HEK293 (cell line): ENCODE measurements at regions of chr22 and their contacts with region 1.

Region 1: GRCh38 chr22:26364066-26365015 is 64.7 kb upstream of the ASPHD2 start:
- H3K4me3 ChIP-seq: no peak overlapping the region
- H3K27ac ChIP-seq: no peak overlapping the region
- H3K4me1 ChIP-seq: no peaks in the 10 kb centered on the region
- CTCF ChIP-seq: peak; percentile 62; the same call in 1 of the 2 replicates

Region 2: DNA sequence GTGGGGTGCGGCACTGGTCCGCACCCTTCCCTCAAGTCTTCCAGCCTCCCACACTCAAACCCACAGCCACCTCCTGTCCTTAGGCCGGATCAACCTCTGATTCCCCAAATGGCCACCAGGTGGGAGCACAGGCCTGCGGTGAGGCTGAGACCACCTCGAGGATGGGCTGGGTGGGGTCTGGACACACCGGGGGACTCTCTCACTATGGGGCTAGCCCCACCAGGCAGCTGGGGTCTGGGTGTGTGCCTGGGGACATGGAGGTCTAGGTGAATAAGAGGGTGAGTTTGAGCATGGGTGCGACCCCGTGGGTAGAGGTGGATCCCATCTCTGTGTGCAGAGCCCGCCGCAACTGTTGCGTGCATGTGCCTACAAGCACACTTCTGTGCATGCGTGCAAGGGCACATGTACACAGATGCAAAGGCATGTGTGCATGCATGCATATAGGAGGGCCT is 589.7 kb before region 1 on chr22:
- CTCF ChIA-PET with region 1: interaction called, 15 read pairs
- POLR2A ChIA-PET with region 1: no interaction called
- H3K4me3 ChIP-seq: no peak overlapping the region
- H3K27ac ChIP-seq: no peak overlapping the region
- H3K4me1 ChIP-seq: no peaks in the 10 kb centered on the region
- CTCF ChIP-seq: peak; percentile 57

Region 3: GRCh38 chr22:26287382-26288225 is 76.7 kb before region 1 on chr22:
- CTCF ChIA-PET with region 1: no interaction called
- POLR2A ChIA-PET with region 1: no interaction called
- H3K4me3 ChIP-seq: no peak overlapping the region
- H3K27ac ChIP-seq: no peak overlapping the region
- H3K4me1 ChIP-seq: no peaks in the 10 kb centered on the region
- CTCF ChIP-seq: no peak

Region 4: DNA sequence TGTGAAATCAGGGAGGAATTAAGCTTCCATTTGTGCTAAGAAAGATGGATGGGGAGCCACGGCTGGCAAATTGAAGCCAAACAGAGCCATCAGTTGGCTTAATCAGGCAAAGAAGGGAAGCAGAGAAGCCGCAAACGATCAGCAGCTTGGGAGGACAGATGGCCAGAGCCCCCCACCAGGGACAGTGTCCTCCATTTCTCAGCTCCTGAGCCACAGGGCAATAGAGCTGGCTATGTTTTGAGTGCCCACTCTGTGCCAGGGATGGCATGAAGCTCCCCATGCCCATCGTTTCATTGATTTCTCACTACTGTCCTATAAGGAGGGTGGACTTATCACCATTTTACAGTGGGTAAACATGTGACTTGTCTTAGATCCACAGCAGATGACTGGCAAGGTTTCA is 61.6 kb before region 1 on chr22:
- CTCF ChIA-PET with region 1: no interaction called
- POLR2A ChIA-PET with region 1: no interaction called
- H3K4me3 ChIP-seq: no peak overlapping the region
- H3K27ac ChIP-seq: no peak overlapping the region
- H3K4me1 ChIP-seq: no peaks in the 10 kb centered on the region
- CTCF ChIP-seq: no peak

Region 5: DNA sequence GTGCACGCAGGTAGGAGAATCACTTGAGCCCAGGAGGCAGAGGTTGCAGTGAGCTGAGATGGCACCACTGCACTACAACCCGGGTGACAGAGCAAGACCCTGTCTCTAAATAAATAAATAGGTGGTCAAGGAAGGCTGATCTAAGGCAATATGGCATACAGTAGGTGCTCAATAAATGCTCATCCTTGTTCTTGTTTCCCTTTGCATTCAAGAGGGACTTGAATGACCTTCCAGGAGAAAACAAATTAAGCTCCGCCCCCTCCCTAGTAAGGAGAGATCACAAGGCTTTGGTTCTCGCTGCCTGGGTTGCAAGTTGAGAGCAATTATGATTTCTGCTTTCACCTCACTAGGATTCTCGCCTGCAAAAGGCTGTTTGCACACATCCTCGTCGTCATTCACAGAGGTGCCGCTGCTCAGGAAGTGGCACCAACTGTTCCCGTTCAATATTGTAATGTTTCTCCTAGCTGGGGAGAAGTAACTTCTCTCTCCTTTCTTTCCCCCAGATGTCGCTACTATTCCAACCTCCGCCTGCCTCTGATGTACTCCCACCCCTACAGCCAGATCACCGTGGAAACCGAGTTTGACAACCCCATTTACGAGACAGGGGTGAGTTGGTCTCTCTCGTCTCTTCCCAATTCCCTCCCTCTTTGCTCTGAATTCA is 13.0 kb after region 1 on chr22:
- CTCF ChIA-PET with region 1: interaction called, 226 read pairs
- POLR2A ChIA-PET with region 1: no interaction called
- H3K4me3 ChIP-seq: no peak overlapping the region
- H3K27ac ChIP-seq: no peak overlapping the region
- H3K4me1 ChIP-seq: no peaks in the 10 kb centered on the region
- CTCF ChIP-seq: peak; percentile 75

Region 6: DNA sequence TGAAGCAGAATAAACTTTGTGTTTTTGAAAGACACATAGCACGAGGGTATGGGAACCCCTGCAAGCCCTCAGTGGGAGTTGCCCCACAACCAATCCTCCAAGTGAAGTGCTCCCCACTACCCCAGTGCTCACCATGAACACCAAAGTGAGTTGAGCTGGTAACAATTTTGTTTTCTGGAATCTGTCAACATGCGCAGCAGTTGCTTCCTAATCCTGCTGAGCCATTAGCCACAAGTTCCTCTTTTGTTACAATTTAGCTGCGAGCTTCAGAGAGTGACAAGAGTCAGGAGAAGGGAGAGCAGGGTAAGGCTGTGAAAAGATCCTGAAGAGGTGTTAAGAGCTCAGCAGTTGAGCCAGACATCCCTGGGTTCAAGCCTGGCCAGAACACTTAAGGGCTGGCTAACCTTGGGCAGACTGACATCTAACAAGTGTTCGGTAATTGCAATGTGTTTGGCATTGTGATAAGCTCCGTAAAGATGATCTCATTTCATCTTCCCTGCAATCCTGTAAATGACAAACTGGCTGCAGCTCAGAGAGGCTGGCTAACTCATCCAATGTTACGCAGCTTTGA is 40.6 kb after region 1 on chr22:
- CTCF ChIA-PET with region 1: interaction called, 16 read pairs
- POLR2A ChIA-PET with region 1: interaction called, 7 read pairs
- H3K4me3 ChIP-seq: no peak overlapping the region
- H3K27ac ChIP-seq: no peak overlapping the region
- H3K4me1 ChIP-seq: no peaks in the 10 kb centered on the region
- CTCF ChIP-seq: no peak

Region 7: DNA sequence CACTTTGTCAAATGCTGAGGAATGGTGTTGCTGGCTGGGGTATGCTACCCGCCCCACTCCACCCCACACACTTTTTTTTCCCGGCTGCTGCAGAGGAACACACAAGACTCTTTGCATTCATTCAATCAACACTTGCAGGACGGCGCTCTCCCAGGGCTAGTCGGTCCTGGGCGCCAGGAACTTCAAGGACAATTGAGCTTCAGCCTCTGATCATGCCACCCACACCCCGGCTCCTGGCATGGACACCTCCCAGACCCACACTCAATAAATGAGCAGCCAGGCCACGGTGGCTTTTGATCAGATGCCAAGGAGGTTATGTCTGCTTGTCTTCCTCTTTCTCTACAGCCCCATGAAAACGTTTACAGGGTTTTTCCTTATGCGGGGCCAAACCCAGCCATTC is 205.8 kb after region 1 on chr22:
- CTCF ChIA-PET with region 1: no interaction called
- POLR2A ChIA-PET with region 1: no interaction called
- H3K4me3 ChIP-seq: no peak overlapping the region
- H3K27ac ChIP-seq: no peak overlapping the region
- H3K4me1 ChIP-seq: no peaks in the 10 kb centered on the region
- CTCF ChIP-seq: no peak

Region 8: GRCh38 chr22:26665813-26666231 is 301.5 kb after region 1 on chr22:
- CTCF ChIA-PET with region 1: interaction called, 61 read pairs
- POLR2A ChIA-PET with region 1: no interaction called
- H3K4me3 ChIP-seq: no peak overlapping the region
- H3K27ac ChIP-seq: no peak overlapping the region
- H3K4me1 ChIP-seq: no peaks in the 10 kb centered on the region
- CTCF ChIP-seq: no peak